H1 (cell line): ENCODE measurements at regions of chr17 and their contacts with region 1.

Region 1: DNA sequence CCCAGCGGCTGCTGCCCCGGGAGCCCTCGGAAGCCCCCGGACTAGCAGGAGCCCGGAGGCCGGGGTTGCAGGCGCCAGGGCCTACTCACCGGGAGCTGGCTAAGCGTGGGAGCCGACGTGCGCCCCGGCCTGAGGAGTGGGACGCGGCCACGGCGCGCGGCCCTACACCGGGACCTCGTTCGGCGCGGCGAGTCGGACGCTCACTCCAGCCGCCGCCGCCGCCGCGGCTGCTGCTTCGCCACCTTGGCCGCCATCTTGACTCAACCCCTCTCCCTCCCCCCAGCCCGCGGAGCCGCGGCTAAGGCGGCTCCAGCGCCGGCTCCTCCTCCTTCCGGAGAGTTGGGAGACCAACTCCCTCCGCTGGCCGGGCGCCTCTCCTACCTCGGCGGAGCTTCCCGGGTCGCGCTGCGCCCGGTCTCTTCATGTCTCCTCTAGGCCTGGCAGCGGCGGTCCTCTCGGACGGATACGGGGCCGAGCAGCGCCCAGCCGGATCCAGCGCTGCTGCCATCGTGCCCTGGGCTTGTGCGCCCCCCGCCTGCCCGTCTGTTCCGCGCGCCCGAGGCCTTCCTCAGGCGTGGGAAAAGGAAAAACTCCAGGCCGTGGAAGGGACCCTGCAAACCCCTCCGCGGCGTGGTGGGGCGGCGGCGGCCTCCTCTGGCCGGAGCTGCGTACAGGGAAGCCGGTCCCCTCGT is at the start of gene NCOR1:
- DNase-seq: peak; percentile 78 to 91
- H3K4me3 ChIP-seq: peak within 1 kb of the TSS; percentile 80 to 92 (median 90)
- H3K27ac ChIP-seq: peak within 1 kb of the TSS; percentile 95
- H3K4me1 ChIP-seq: peaks cover 0 to 6% (median 2%) of the 10 kb centered on the region in 4 experiments; a peak in 5 of 7 replicates
- H3K27me3 ChIP-seq: no peaks in the 10 kb centered on the region
- CTCF ChIP-seq: peak in 2 of 3 experiments; percentile 9 to 21; a peak in 2 of 4 replicates
- EP300 ChIP-seq: peak in 1 of 2 experiments; percentile 72; a peak in 1 of 3 replicates
- POLR2A ChIP-seq: peak; percentile 88 to 94
- RAD21 ChIP-seq: peak; percentile 14 to 40; a peak in 2 of 4 replicates
- total RNA-seq, gene NCOR1: 141 and 142 TPM in 2 replicates

Region 2: GRCh38 chr17:16052486-16052885 is 162.9 kb before region 1 on chr17:
- CTCF ChIA-PET with region 1: no interaction called
- POLR2A ChIA-PET with region 1: no interaction called
- DNase-seq: no peak
- H3K4me3 ChIP-seq: no peak overlapping the region
- H3K27ac ChIP-seq: no peak overlapping the region
- H3K4me1 ChIP-seq: no peaks in the 10 kb centered on the region
- H3K27me3 ChIP-seq: no peaks in the 10 kb centered on the region
- CTCF ChIP-seq: no peak
- EP300 ChIP-seq: no peak
- POLR2A ChIP-seq: no peak
- RAD21 ChIP-seq: no peak

Region 3: DNA sequence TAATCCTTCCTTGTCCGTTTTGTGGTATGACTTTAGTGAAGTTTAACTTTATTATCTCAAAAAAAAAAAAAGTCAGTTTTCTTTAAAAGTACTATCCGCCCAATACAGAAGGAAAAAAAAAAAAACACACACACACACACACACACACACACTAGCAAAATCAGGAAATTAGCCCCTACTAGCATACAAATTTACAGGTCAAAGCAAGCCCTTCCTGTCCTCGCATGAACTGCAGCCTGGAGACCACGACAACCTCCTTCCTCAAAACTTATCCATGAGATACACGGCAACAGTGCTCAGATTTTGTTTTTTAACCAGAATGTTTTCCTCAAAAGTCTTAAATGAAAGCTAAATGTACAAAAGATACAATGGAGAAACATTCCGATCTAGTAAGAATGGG is 16.3 kb before region 1 on chr17:
- CTCF ChIA-PET with region 1: no interaction called
- POLR2A ChIA-PET with region 1: interaction called, 46 read pairs
- DNase-seq: no peak
- H3K4me3 ChIP-seq: peak overlapping the region in 1 of 4 experiments; percentile 43; a peak in 2 of 8 replicates
- H3K27ac ChIP-seq: no peak overlapping the region; the same call in 1 of the 2 replicates
- H3K4me1 ChIP-seq: peaks cover 0 to 4% (median 3%) of the 10 kb centered on the region in 4 experiments; a peak in 4 of 7 replicates
- H3K27me3 ChIP-seq: no peaks in the 10 kb centered on the region
- CTCF ChIP-seq: no peak
- EP300 ChIP-seq: no peak
- POLR2A ChIP-seq: no peak
- RAD21 ChIP-seq: no peak